Panc1 (cell line): ENCODE measurements at regions of chr1 and their contacts with region 1.

Region 1: DNA sequence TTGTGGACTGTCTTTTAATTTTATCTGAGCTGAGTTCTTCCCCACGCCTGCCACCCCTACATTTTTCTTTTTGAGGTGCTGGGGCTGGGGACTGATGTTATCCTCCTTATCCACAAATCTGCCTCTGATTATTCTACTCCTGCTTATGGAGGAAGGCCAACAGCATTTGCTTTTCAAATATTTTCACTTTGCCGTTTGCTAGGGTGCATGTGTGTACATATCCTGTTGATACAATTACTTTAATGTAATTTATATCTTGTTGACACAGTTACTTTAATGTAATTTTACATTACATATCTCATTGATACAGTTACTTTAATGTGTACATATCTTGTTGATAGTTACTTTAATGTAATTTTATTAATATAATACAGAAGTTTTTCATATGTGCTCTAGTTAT is 36.2 kb downstream of the PRRC2C start:
- DNase-seq: no peak
- ATAC-seq: no peak
- H3K4me3 ChIP-seq: no peak overlapping the region
- H3K27ac ChIP-seq: no peak overlapping the region
- H3K4me1 ChIP-seq: no peaks in the 10 kb centered on the region
- H3K27me3 ChIP-seq: no peaks in the 10 kb centered on the region
- CTCF ChIP-seq: no peak

Region 2: DNA sequence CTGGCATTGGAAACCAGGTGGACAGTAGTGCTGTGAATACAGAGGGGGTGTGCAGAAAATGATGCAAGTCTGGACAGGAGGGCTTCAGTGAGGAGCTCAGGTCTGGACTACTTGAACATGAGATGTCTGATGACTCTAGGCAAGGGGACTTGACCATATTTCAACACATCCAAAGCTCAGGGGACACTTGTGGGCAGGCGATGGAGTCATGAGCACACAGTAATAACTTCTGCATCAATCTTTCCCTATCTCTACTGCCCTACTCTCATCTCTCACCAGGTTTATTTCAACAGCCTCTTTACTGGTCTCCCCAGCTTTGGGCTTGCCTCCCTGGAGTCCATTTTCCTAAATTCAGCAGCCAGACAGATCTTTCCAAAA is 314.6 kb before region 1 on chr1:
- CTCF ChIA-PET with region 1: no interaction called
- POLR2A ChIA-PET with region 1: no interaction called
- in situ Hi-C with region 1: no loop called
- intact Hi-C with region 1: no loop called
- DNase-seq: no peak
- ATAC-seq: no peak
- H3K4me3 ChIP-seq: no peak overlapping the region
- H3K27ac ChIP-seq: no peak overlapping the region
- H3K4me1 ChIP-seq: no peaks in the 10 kb centered on the region
- H3K27me3 ChIP-seq: no peaks in the 10 kb centered on the region; the same call in 1 of the 2 replicates
- CTCF ChIP-seq: no peak

Region 3: DNA sequence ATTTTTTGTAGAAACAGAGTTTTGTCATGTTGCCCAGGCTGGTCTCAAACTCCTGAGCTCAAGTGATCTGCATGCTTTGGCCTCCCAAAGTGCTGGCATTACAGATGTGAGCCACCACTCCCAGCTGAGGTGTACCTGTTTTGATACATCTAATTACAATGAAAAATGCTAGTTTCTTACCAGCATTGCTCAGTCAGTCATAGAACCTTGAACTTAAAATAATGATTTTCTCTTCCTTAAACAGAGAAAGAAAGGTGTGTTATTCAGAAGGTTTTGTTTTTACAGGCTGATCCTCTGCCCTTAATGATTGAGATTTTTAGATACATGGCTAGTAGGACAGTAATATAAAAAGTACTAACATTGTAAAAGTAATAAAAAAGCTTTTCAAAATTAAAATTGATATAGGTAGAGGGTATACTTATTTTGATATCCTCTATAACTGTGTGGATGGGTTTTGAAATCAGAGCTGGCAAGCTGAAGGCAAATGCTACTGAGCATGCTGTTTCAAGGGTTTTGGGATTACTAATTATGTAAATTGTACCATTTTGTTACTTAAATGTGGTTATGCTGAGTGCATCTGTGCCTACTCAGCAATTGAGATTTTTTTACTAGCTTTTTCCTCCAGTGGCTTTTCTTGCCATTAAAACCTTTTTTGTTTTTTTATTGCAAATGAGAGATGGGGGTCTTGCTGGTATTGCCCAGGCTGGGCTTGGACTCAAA is 20.1 kb before region 1 on chr1:
- CTCF ChIA-PET with region 1: no interaction called
- POLR2A ChIA-PET with region 1: interaction called, 10 read pairs
- in situ Hi-C with region 1: no loop called
- intact Hi-C with region 1: no loop called
- DNase-seq: no peak
- ATAC-seq: no peak
- H3K4me3 ChIP-seq: no peak overlapping the region
- H3K27ac ChIP-seq: no peak overlapping the region
- H3K4me1 ChIP-seq: no peaks in the 10 kb centered on the region
- H3K27me3 ChIP-seq: no peaks in the 10 kb centered on the region
- CTCF ChIP-seq: no peak

Region 4: GRCh38 chr1:171595324-171595723 is 73.8 kb after region 1 on chr1:
- CTCF ChIA-PET with region 1: no interaction called
- POLR2A ChIA-PET with region 1: no interaction called
- in situ Hi-C with region 1: no loop called
- intact Hi-C with region 1: no loop called
- DNase-seq: no peak
- ATAC-seq: no peak
- H3K4me3 ChIP-seq: no peak overlapping the region
- H3K27ac ChIP-seq: no peak overlapping the region
- H3K4me1 ChIP-seq: no peaks in the 10 kb centered on the region
- H3K27me3 ChIP-seq: no peaks in the 10 kb centered on the region
- CTCF ChIP-seq: no peak